Sigmoid colon (tissue), 7 donors: ENCODE measurements at regions of chr6 and their contacts with region 1.

Region 1: DNA sequence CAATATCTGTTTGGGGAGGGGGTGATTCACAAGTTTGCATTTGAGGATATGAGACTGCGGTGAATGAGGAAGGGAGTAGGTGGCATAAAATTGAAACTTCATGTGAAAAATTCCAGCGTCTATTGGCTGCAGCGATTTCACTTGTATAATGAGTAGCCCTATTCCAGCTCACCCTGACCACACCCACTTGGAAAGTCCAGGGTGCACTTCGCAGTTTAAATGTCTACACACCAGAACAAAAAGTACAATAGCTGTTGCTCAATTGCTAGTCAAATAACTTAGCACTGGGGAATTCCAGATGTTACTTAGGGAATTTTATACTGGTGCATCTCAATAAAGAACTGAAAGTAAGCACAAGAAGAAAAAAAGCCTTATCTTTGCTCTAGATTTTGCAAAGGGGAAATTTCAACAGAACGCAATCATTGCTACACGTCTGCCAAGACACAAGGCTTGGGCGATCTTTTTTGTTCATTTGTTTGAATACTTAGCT is 6.3 kb downstream of the TNFAIP3 start:
- DNase-seq: peak; percentile 93
- H3K4me3 ChIP-seq: peak overlapping the region in 3 of 4 donors; percentile 16 to 29 (median 20)
- H3K27ac ChIP-seq: peak overlapping the region; percentile 67 to 97 (median 85)
- H3K4me1 ChIP-seq: peaks cover 0 to 64% (median 52%) of the 10 kb centered on the region in 4 donors
- H3K27me3 ChIP-seq: no peaks in the 10 kb centered on the region
- CTCF ChIP-seq: no peak
- EP300 ChIP-seq: peak in 2 of 4 donors; percentile 83 to 85
- POLR2A ChIP-seq: no peak

Region 2: DNA sequence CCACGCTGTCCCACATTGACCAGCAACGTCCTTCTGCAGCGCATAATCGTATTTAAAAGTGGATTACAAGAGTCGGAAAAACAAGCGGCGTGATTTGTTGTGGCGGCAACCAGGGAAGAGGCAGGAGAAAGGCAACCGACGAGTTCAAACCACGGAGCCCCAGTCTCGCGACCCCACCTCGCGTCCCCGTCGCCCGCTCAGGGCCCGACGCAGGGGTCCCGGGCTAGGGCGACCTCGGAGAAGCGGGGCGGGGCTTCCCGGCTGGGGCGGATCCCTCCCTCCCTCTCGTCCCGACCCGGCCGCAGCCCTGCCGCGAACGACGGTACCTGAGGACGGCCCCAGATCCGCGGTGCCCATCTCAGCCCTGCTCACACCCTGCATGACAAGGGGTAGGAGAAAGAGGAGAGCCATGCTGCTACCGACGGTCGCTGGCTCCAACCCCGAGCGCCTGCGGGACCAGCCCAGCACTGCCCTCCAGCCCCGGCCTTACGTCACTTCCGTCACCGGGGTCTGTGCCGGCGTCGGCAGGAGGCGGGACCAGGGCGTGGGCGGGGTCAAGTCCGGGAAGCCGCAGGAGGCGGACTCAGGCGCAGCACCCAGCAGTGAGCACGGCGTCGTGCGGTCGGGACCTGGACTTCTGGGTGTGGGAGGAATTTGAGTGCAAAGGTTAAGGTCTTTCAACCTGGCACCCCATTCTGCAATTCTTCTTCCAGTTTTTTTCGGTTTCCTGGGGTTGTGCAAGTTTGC is 654.2 kb before region 1 on chr6 and contains the start of gene IFNGR1:
- intact Hi-C with region 1: loop called (anchors 10 kb)
- DNase-seq: peak; percentile 98
- H3K4me3 ChIP-seq: peak within 1 kb of the TSS; percentile 80 to 94 (median 84)
- H3K27ac ChIP-seq: peak within 1 kb of the TSS; percentile 94 to 97 (median 96)
- H3K4me1 ChIP-seq: peaks cover 0 to 50% (median 42%) of the 10 kb centered on the region in 4 donors
- H3K27me3 ChIP-seq: no peaks in the 10 kb centered on the region
- CTCF ChIP-seq: no peak
- EP300 ChIP-seq: peak in 1 of 4 donors; percentile 13
- POLR2A ChIP-seq: peak; percentile 94 to 96
- total RNA-seq, gene IFNGR1: 47.4 to 67.1 (median 62.3) TPM

Region 3: DNA sequence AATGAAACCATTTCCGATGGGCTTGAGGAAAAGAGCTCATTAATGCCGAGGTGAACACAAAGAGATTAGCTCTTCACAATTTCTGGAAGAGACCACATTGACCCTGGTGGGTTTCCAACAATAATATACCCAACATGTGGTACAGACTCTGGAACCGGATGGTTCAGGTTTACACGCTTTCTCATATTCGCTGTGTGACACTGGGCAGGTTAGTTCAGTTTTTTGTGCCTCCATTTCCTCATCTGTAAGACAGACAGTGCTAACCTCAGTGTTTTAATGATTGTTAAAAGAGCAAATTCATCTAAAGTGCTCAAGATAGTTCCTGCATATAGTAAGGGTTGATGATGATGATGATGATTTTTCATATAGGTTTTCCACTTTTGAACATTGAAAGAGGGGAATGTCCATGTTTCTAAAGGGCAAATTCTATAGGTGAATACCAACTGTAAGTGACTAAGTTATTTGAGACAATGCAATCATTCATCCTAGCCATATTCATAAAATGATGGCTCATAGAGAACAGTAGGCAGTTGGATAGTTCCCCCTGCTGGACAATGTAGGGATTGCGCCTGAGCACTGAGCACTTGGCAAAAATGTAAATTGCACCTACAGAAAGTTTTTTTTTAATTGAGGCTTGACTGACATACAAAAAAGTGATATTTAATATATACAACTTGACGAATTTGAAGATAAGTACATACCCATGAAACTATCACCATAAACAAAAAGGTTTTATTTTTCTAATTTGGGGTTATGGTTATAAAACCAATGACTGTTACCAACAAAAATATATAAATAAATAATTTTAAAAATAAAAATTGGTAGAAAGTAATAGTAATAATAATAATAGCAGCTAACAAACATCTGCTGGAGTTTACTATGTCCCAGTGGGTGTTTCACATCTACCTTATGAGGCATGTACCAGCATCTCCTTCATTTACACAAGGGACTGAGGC is 236.0 kb after region 1 on chr6:
- intact Hi-C with region 1: loop called (anchors 10 kb)
- DNase-seq: peak; percentile 80
- H3K4me3 ChIP-seq: no peak overlapping the region
- H3K27ac ChIP-seq: peak overlapping the region; percentile 82 to 92 (median 88)
- H3K4me1 ChIP-seq: peaks cover 0 to 31% (median 24%) of the 10 kb centered on the region in 4 donors
- H3K27me3 ChIP-seq: no peaks in the 10 kb centered on the region
- CTCF ChIP-seq: peak; percentile 90 to 97 (median 94)
- EP300 ChIP-seq: no peak
- POLR2A ChIP-seq: no peak